ENCODE measurements at regions of chr7 and their contacts with region 1.

Region 1: GRCh38 chr7:149284850-149285626 is 23.0 kb downstream of the ZNF783 start:
- DNase-seq: peak; percentile 99
- ATAC-seq: peak; percentile 99
- H3K4me3 Mint-ChIP-seq: peak overlapping the region; percentile 84
- H3K27ac Mint-ChIP-seq: peak overlapping the region; percentile 61
- H3K4me1 Mint-ChIP-seq: peaks cover 38% of the 10 kb centered on the region
- H3K27me3 Mint-ChIP-seq: no peaks in the 10 kb centered on the region

Region 2: DNA sequence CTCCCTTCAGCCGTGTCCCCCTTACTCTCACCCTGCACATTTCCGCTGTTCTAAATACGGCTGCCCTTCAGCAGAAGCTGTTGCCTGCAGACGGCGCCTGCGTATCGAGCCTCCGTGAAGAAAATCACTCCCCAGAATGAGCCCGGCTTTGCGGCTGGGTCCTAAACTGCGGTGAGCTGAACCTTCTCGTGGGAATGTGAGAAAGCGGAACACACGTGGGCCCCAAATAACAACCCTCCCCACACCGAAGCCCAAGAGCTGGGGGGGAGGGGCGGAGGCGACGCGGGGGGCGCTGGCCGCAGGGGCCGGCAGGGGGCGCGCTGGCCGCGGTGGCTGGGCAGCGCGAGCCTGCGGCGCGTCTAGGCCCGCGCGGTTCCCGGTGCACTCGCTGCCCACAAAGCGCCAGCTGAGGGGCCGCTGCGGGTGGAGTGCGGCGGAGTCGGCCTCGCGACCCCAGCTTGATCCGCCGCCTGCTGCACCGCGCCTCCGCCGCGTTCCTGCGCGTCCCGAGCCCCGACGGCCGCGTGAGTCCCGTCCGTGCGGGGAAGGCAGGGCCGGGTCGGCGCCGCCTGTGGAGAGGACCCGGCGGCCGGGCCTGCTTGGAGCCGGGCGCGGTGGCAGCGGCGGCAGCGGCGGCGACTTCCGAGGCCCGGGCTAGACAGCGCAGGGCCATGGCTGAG is 137.8 kb before region 1 on chr7 and contains the start of gene ZNF398:
- CTCF ChIA-PET with region 1: interaction called, 4 read pairs
- POLR2A ChIA-PET with region 1: no interaction called
- intact Hi-C with region 1: loop called in 1 of 2 experiments (anchors 1 kb)
- DNase-seq: peak; percentile 87
- ATAC-seq: peak; percentile 71
- H3K4me3 Mint-ChIP-seq: peak within 1 kb of the TSS; percentile 98
- H3K27ac Mint-ChIP-seq: peak within 1 kb of the TSS; percentile 99
- H3K4me1 Mint-ChIP-seq: peaks cover 34% of the 10 kb centered on the region
- H3K27me3 Mint-ChIP-seq: no peaks in the 10 kb centered on the region
- total RNA-seq, gene ZNF398: 9.6 to 10.5 TPM

Region 3: DNA sequence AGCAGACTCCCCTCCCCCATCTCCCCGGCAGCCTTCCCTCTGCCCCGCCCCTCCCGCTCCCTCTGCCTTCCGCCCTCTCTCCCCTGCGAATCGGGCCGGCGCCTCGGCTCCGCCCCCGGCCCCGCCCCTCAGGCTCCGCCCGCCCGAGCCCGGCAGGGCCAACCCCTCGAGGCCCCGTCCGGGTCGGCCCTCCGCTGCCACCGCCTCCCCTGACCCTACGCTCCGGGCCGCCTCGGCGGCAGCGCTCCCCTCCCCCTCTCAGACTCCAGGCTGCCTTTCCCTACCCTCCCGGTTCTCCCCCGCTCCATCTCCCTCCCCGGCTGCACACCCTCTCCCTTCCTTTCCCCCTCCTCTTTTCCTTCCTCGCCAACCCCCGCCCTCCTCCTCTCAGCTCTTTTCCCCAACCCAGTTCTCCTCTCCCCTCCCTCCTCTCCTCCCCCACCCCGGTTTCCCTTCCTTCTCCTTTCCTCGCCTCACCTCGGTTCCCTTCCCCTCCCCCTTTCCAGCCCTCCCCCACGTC is 486.7 kb after region 1 on chr7:
- CTCF ChIA-PET with region 1: no interaction called
- POLR2A ChIA-PET with region 1: no interaction called
- intact Hi-C with region 1: loop called in 1 of 2 experiments (anchors 1 kb)
- DNase-seq: peak; percentile 93
- ATAC-seq: peak; percentile 98
- H3K4me3 Mint-ChIP-seq: peak overlapping the region; percentile 59
- H3K27ac Mint-ChIP-seq: no peak overlapping the region
- H3K4me1 Mint-ChIP-seq: peaks cover 2% of the 10 kb centered on the region
- H3K27me3 Mint-ChIP-seq: peaks cover 9% of the 10 kb centered on the region